Activated CD4-positive, alpha-beta T cell treated with anti-CD3 and anti-CD28 coated beads, Interleukin-2, amount 10 ng/mL, durations not matched to agents 24 days and 14 days (primary cell): ENCODE measurements at regions of chr7 and their contacts with region 1.

Region 1: DNA sequence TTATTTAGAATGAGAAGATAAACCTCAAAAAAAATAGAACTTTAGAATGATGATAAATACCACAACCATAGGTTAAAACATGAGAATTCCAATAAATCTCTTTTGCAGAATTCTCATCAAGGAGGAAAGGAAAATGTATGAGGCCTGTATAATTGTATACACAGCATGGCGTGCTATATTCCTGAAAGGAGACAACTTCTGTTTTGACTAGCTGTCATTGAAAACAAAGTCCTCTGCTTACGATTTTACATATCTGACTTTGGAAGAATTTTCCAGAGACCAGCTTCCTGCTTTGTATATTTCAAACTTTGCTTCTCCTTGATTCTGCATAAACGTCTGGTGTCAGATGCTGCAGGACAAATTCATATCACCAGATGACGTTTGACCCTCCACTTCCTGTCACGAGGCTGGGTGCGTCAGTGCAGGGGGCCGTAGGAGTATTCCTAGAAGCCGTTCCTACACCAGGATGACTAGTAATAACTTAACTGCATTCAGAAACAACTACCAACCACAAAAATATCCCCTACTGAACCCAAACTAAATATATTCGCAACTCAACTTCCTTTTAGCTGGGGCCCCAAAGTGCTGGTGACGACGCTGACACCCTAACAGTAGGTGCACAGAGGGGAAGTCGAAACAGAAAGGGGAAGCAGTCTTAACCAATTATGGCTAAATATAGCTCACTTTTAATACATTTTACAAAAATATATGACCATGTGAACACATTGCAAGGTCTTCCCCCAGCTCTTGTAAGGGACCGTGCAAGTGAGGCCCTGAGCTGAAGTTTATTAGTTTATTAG is 178.6 kb upstream of the INHBA start:
- DNase-seq: peak; percentile 93
- H3K4me3 Mint-ChIP-seq: peak overlapping the region; percentile 83
- H3K27ac Mint-ChIP-seq: peak overlapping the region; percentile 98
- H3K4me1 Mint-ChIP-seq: peaks cover 49% of the 10 kb centered on the region
- H3K27me3 Mint-ChIP-seq: no peaks in the 10 kb centered on the region

Region 2: DNA sequence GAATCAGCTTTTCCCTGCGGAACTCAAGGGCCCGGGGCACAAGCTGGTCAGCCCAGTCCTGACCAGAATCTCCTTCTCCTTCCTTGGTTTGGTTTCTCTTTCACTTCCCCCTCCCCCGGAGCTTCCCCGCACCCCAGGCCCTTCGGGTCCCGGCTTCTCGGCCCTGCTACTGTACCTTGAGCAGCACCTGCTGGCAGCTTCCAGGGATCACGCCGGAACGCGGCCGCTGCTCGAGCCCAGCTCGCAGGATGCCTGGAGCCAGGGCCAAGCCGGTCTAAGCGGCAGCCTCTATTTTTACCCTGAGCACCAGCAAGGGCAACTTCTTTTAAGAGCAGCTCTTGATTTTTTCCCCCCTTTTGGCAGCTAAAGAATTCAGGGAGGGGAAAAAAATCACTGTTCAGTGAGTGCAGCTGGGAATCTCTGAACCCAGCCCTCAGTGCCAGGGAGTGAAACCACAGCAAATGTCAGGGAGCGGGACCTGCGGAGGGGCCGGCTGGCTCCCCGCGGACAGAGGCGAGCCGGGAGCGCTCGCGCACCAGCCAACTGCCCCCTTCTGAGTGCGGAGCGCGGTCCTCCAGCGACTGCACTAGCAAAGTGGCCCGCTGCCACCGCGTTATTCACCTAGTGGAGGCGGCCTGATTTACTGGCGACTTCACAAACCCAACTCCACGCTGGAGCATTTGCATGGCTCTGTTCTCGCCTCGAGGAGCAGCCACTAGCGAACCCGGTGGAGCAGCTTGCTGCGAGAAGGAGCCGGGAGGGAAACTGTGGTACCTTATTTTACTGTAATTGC is 176.2 kb before region 1 on chr7:
- intact Hi-C with region 1: loop called (anchors 10 kb)
- DNase-seq: peak; percentile 88
- H3K4me3 Mint-ChIP-seq: peak overlapping the region; percentile 84
- H3K27ac Mint-ChIP-seq: no peak overlapping the region
- H3K4me1 Mint-ChIP-seq: peaks cover 15% of the 10 kb centered on the region
- H3K27me3 Mint-ChIP-seq: peaks cover 58% of the 10 kb centered on the region

Region 3: GRCh38 chr7:41731492-41732435 is 149.8 kb before region 1 on chr7:
- intact Hi-C with region 1: loop called (anchors 1 kb)
- DNase-seq: peak; percentile 56
- H3K4me3 Mint-ChIP-seq: no peak overlapping the region
- H3K27ac Mint-ChIP-seq: no peak overlapping the region
- H3K4me1 Mint-ChIP-seq: peaks cover 9% of the 10 kb centered on the region
- H3K27me3 Mint-ChIP-seq: peaks cover 3% of the 10 kb centered on the region

Region 4: GRCh38 chr7:41817386-41817785 is 64.1 kb before region 1 on chr7:
- intact Hi-C with region 1: loop called (anchors 5 kb)
- DNase-seq: peak; percentile 72
- H3K4me3 Mint-ChIP-seq: no peak overlapping the region
- H3K27ac Mint-ChIP-seq: peak overlapping the region; percentile 14
- H3K4me1 Mint-ChIP-seq: peaks cover 31% of the 10 kb centered on the region
- H3K27me3 Mint-ChIP-seq: peaks cover 7% of the 10 kb centered on the region

Region 5: DNA sequence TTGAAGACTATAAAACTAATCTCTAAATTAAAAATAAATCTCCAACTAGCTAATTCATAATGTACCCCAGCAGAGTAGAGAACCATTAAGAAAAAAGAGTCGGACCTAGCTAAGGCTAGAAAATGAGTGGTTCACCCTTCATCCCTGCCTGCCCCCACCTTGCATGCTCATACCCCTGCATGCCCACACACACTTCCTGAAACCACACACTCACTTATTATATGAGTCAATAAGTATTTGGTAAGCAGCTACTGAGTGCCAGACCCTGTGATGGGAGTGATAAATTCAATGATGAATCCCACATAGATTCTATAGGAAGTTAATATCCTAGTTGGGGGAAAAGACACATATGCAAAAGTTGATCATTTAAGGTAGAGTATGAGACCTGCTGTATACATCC is 25.7 kb before region 1 on chr7:
- intact Hi-C with region 1: no loop called
- DNase-seq: no peak
- H3K4me3 Mint-ChIP-seq: no peak overlapping the region
- H3K27ac Mint-ChIP-seq: no peak overlapping the region
- H3K4me1 Mint-ChIP-seq: peaks cover 5% of the 10 kb centered on the region
- H3K27me3 Mint-ChIP-seq: peaks cover 2% of the 10 kb centered on the region

Region 6: DNA sequence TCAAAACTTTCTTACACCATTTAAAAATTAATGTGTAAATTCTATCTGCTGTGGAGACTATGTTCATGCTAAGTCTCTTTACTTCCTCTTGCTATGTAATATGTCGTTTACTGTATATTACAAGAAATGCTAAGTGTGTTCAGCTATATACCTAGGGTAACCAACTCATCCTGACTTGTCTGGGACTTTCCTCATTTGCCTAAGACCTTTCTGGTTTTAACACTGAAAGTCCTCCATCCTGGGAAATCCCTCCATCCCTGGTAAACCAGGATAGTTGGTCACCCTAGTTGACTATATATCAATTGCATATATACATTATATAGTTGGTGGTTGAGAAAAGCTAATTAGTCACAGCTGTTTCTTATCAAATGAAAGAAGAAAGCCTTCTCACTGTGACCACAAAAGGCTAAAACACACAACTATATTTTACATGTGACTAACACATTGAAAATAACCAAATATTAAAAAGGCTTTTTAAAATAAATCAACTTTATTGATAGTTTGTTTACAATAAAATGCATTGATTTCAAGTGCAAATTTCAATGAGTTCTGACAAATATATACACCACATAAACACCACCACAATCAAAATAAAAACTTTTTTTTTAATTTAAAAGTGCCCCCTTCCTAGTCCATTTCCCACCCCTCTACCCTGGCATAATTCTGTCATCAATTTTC is 10.9 kb before region 1 on chr7:
- intact Hi-C with region 1: loop called (anchors 1 kb)
- DNase-seq: no peak
- H3K4me3 Mint-ChIP-seq: no peak overlapping the region
- H3K27ac Mint-ChIP-seq: peak overlapping the region; percentile 83
- H3K4me1 Mint-ChIP-seq: peaks cover 37% of the 10 kb centered on the region
- H3K27me3 Mint-ChIP-seq: peaks cover 2% of the 10 kb centered on the region

Region 7: GRCh38 chr7:42869131-42870020 is 987.8 kb after region 1 on chr7:
- intact Hi-C with region 1: loop called (anchors 1 kb)
- DNase-seq: peak; percentile 79
- H3K4me3 Mint-ChIP-seq: peak overlapping the region; percentile 62
- H3K27ac Mint-ChIP-seq: peak overlapping the region; percentile 86
- H3K4me1 Mint-ChIP-seq: peaks cover 24% of the 10 kb centered on the region
- H3K27me3 Mint-ChIP-seq: peaks cover 1% of the 10 kb centered on the region

Region 8: GRCh38 chr7:42931834-42932651 is 1050.5 kb after region 1 on chr7 and contains the starts of genes MRPL32 and PSMA2:
- intact Hi-C with region 1: loop called (anchors 10 kb)
- DNase-seq: peak; percentile 99
- H3K4me3 Mint-ChIP-seq: peak within 1 kb of the TSS; percentile 97
- H3K27ac Mint-ChIP-seq: peak within 1 kb of the TSS; percentile 99
- H3K4me1 Mint-ChIP-seq: peaks cover 53% of the 10 kb centered on the region
- H3K27me3 Mint-ChIP-seq: no peaks in the 10 kb centered on the region
- total RNA-seq, gene MRPL32: 81.6 and 89.1 TPM in 2 replicates
- total RNA-seq, gene PSMA2: 202 and 209 TPM in 2 replicates